ENCODE measurements at regions of chr12 and their contacts with region 1.

Region 1: GRCh38 chr12:97336900-97337751 is 125.5 kb upstream of the RMST start:
- DNase-seq: no peak
- ATAC-seq: no peak
- H3K4me3 ChIP-seq: no peak overlapping the region
- H3K27ac ChIP-seq: no peak overlapping the region
- H3K4me1 ChIP-seq: no peaks in the 10 kb centered on the region
- H3K27me3 ChIP-seq: no peaks in the 10 kb centered on the region
- CTCF ChIP-seq: no peak

Region 2: DNA sequence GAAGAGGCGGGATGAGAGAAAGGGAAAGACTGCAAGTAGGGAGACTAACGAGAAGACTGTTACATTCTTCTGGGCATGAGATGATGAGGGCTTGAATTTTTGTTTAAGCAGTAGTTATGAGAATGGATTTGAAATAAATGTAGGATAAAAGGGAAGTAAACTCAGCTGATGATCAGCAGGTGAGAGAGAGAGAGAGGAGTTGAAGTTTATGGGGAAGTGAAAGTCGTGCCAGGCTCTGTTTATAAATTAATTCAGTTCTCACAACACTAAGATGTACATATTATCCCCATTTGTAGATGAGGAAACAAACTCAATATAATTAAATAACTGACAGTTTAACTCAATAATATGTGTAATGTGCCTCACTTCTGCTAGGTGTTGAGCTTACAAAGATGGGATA is 44.5 kb before region 1 on chr12:
- intact Hi-C with region 1: no loop called
- DNase-seq: no peak
- ATAC-seq: no peak
- H3K4me3 ChIP-seq: no peak overlapping the region
- H3K27ac ChIP-seq: no peak overlapping the region
- H3K4me1 ChIP-seq: no peaks in the 10 kb centered on the region
- H3K27me3 ChIP-seq: no peaks in the 10 kb centered on the region
- CTCF ChIP-seq: no peak

Region 3: GRCh38 chr12:97321621-97322020 is 15.5 kb before region 1 on chr12:
- intact Hi-C with region 1: loop called in 1 of 2 experiments (anchors 1 kb)
- DNase-seq: no peak
- ATAC-seq: no peak
- H3K4me3 ChIP-seq: no peak overlapping the region
- H3K27ac ChIP-seq: no peak overlapping the region
- H3K4me1 ChIP-seq: no peaks in the 10 kb centered on the region
- H3K27me3 ChIP-seq: peaks cover 0 to under 1% (median 0%) of the 10 kb centered on the region in 3 donors
- CTCF ChIP-seq: no peak

Region 4: DNA sequence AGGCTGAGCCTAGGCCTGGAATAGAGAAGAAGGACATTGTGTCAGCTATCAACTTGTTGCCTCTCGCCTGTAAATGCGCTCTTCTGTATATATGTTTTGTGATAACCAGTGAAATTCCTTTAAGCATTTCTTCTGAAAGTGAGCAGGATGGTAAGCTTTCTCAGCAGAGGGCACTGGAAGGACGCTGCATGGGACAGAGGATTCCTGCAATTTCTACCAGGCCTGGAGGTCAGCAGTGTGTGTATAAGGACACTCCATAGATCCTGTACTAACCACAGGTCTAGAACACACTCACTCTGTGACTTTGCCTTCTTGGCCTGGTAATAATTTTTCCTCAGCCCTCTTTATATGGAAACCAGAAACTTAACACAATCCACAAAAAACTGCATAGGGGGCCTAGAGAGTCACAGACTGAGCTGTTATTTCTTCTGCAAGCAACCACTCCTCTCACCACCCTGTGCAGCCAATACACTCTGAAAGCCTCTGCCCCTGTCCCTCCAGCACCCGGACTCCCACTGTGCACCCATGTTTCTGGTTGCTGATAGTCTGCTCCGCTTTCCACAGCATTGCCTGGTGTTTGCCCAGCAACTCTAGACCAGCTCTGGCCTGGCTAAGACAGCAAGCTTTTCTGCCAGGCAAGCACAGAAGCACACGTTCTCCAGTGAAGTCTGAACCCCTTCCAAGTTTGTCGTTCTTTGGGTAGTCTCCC is 31.5 kb after region 1 on chr12:
- intact Hi-C with region 1: no loop called
- DNase-seq: no peak
- ATAC-seq: no peak
- H3K4me3 ChIP-seq: no peak overlapping the region
- H3K27ac ChIP-seq: no peak overlapping the region
- H3K4me1 ChIP-seq: no peaks in the 10 kb centered on the region
- H3K27me3 ChIP-seq: no peaks in the 10 kb centered on the region
- CTCF ChIP-seq: no peak